Heart right ventricle (tissue), 16 donors: ENCODE measurements at regions of chr12 and their contacts with region 1.

Region 1: DNA sequence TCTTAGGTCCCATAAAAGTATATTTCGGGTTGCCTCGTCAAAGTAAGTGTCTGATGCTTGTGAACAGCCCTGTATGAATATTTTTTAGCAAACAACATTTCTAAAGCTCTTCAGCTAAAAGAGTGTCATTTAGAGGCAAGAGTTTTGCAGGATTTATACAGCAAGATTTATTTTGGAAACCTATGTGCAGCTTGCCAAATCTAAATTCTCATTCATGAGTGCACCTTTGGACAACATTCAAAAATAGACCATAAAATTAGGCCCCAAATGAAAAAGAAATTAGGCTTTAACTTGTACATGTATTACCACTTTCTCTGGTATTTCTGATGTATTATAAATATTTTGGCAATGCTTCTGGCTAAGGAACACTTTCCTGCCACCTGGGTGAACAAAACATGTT is 224.4 kb upstream of the PDZRN4 start:
- DNase-seq: no peak
- ATAC-seq: no peak
- H3K4me3 ChIP-seq: no peak overlapping the region
- H3K27ac ChIP-seq: no peak overlapping the region
- H3K4me1 ChIP-seq: no peaks in the 10 kb centered on the region
- H3K27me3 ChIP-seq: no peaks in the 10 kb centered on the region
- CTCF ChIP-seq: no peak

Region 2: GRCh38 chr12:41034686-41035085 is 70.9 kb after region 1 on chr12:
- intact Hi-C with region 1: loop called in 1 of 10 experiments (anchors 2 kb)
- DNase-seq: no peak
- ATAC-seq: no peak
- H3K4me3 ChIP-seq: no peak overlapping the region
- H3K27ac ChIP-seq: no peak overlapping the region
- H3K4me1 ChIP-seq: no peaks in the 10 kb centered on the region
- H3K27me3 ChIP-seq: no peaks in the 10 kb centered on the region
- CTCF ChIP-seq: no peak

Region 3: DNA sequence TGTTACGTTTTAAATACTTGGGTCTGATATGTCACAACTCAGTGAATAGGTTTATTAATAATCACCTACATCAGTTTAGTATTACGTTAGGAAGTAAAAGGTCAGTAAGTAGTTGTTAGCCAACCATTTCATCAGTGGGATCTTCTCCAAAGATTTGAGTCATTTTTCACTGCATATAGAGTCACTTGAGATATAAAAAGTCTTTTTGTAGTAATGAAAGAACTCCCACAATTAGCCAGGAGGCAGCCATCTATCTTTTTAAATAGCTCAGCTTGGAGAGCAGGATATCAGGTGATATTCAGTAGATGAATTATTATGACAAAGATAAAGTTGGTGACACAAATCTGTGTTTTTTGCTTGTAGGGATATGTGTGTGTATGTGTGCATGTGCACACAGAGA is 533.7 kb after region 1 on chr12:
- intact Hi-C with region 1: no loop called
- DNase-seq: no peak
- ATAC-seq: no peak
- H3K4me3 ChIP-seq: no peak overlapping the region
- H3K27ac ChIP-seq: no peak overlapping the region
- H3K4me1 ChIP-seq: no peaks in the 10 kb centered on the region
- H3K27me3 ChIP-seq: no peaks in the 10 kb centered on the region
- CTCF ChIP-seq: no peak